ENCODE measurements at regions of chr11 and their contacts with region 1.

Region 1: DNA sequence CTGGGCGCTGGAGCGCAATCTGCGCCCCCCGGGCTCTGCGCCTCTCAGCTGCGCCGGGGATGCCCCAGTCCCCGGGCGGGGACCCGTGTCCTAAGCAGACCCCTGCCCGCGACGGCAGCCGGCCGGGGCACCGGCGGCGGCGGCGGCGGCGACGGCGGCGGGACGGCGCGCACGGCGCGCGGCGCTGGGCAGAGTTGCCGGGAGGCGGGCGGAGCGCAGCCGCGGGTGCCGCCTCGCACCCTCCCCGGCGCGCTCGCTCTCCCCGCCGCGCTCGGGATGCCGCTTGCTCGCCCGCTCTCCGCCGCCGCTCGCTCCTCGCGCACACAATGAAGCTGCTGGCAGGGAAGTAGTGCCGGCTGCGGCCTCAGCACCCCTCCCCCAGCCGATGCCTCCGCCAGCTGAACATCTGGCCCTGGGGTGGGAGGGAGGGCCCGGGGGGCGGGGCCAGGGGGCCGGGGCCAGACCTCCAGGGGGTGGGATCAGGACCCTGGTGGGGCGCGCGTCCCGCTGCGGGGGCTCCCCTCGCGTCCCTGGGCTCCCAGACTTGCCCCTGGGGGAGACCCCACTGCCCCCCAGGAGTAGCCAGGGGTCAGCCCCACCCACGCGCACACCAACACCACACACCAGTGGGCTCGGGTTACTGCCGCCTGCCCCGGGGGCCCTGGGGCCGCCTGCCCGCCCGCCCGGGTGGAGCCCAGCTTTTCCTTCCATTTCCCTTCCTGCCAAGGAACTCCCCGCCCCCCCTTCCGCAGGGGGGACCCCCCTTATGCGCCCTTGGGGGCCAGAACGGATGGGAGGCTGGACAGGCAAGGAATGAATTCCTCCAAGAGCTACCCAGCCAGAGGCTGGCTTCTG is at the start of gene RCOR2:
- DNase-seq: peak; percentile 91
- ATAC-seq: peak; percentile 51
- total RNA-seq, gene RCOR2: 11.1 TPM

Region 2: GRCh38 chr11:63683133-63683991 is 233.7 kb before region 1 on chr11:
- intact Hi-C with region 1: no loop called
- DNase-seq: no peak
- ATAC-seq: no peak

Region 3: GRCh38 chr11:63871962-63872799 is 44.9 kb before region 1 on chr11:
- intact Hi-C with region 1: loop called (anchors 1 kb)
- DNase-seq: peak; percentile 84
- ATAC-seq: peak; percentile 96